Endothelial cell of umbilical vein (primary cell): ENCODE measurements at regions of chr11 and their contacts with region 1.

Region 1: DNA sequence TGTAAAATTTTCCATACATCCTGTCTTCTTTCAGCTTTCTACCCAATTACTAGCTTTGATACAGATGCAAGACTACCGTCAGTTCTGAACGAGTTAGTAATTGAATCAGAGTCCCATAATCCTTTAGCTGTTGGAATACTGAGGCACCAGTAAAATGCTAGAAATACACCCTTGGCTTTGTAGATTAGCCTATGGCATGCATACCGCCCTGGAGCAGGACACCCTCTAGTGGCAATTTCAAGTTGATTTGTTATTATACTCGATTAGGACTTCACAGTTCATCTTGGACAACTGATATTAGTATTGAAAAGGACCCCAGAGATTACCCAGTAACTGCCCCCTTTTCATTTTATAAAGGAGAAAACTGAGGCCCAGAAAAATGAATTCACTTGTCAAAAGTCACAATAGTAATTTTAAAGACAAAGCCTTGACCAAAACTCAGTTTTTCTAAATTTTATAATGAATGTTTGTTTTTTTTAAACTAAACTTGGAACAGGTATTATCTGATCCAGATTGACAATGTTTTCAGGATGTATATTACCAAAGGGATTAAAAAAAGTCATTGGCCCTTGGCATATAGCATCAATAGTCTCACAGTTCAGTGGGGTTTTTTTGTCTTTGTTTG is 72.6 kb downstream of the HIPK3 start:
- DNase-seq: peak; percentile 75
- H3K4me3 ChIP-seq: no peak overlapping the region
- H3K27ac ChIP-seq: no peak overlapping the region
- H3K4me1 ChIP-seq: no peaks in the 10 kb centered on the region
- H3K27me3 ChIP-seq: no peaks in the 10 kb centered on the region
- CTCF ChIP-seq: peak; percentile 45 to 61
- POLR2A ChIP-seq: no peak

Region 2: GRCh38 chr11:32960553-32961164 is 369.2 kb before region 1 on chr11:
- CTCF ChIA-PET with region 1: no interaction called
- POLR2A ChIA-PET with region 1: no interaction called
- dilution Hi-C with region 1: no loop called
- intact Hi-C with region 1: loop called (anchors 5 kb)
- DNase-seq: peak; percentile 60
- H3K4me3 ChIP-seq: no peak overlapping the region
- H3K27ac ChIP-seq: no peak overlapping the region
- H3K4me1 ChIP-seq: no peaks in the 10 kb centered on the region
- H3K27me3 ChIP-seq: no peaks in the 10 kb centered on the region
- CTCF ChIP-seq: peak; percentile 39 to 40
- POLR2A ChIP-seq: no peak

Region 3: GRCh38 chr11:33257897-33258630 is 71.8 kb before region 1 on chr11:
- CTCF ChIA-PET with region 1: interaction called, 3 read pairs
- POLR2A ChIA-PET with region 1: no interaction called
- dilution Hi-C with region 1: no loop called
- intact Hi-C with region 1: loop called (anchors 1 kb)
- DNase-seq: peak; percentile 82
- H3K4me3 ChIP-seq: peak overlapping the region; percentile 59 to 93 (median 88)
- H3K27ac ChIP-seq: peak overlapping the region; percentile 98
- H3K4me1 ChIP-seq: peaks cover 18% of the 10 kb centered on the region
- H3K27me3 ChIP-seq: no peaks in the 10 kb centered on the region
- CTCF ChIP-seq: peak; percentile 7 to 29
- POLR2A ChIP-seq: no peak